Common myeloid progenitor, CD34-positive (primary cell): ENCODE measurements at regions of chr9 and their contacts with region 1.

Region 1: DNA sequence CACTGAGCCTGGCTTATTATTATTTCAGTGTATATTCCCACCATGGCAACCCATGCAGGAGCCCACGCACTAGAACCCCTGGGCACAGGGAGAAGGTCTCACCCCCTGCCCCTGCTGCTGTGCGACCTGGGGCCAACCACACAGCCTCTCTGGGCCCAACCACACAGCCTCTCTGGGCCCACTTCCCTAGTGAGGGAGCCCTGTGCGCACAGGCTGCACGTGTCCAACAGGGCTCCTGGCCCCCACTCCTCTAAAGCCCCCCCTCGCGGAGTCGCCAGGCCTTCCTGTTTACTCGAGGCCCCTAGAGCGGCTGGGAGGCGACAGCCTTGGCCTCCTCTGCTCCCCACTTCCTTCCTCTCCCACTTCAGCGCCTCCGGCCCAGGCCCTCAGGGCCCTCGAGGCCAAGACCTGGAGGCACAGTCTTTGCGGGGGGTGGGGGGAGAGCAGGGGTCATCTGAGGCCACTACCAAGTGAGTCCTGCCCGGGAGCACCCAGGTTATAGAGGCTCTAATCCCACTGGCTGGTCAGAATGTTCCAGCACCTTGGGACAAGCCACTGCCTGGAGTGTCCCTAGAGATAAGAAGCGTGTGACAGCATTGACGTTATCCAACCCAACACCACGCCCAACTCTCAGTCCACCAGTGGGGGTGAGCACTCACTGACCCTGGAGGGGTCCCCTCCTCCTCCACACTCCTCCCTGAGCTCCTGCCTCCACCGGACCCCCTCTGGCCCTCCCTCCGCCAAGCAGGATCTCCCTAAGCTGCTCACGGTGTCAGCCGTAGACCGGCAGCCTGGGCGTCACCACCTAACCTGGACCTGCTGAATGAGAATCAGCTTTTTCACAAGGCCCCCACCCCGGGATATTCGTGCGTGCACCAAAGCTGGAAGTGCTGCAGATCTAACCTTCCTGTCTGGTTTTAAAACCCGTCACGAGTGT is 7.9 kb upstream of the ENG start:
- DNase-seq: peak; percentile 81 to 97 (median 96)
- H3K4me3 ChIP-seq: peak overlapping the region in 4 of 7 experiments; percentile 26 to 57 (median 39)
- H3K27ac ChIP-seq: peak overlapping the region; percentile 66 to 85
- H3K4me1 ChIP-seq: peaks cover 19 to 89% (median 83%) of the 10 kb centered on the region in 4 experiments
- H3K27me3 ChIP-seq: no peaks in the 10 kb centered on the region

Region 2: GRCh38 chr9:127796225-127796813 is 66.0 kb before region 1 on chr9:
- CTCF ChIA-PET with region 1: interaction called, 11 read pairs
- POLR2A ChIA-PET with region 1: interaction called, 4 read pairs
- DNase-seq: peak in 2 of 3 donors; percentile 45 to 63
- H3K4me3 ChIP-seq: peak overlapping the region in 3 of 7 experiments; percentile 16 to 54 (median 32)
- H3K27ac ChIP-seq: peak overlapping the region in 1 of 2 experiments; percentile 55
- H3K4me1 ChIP-seq: peaks cover 19 to 85% (median 65%) of the 10 kb centered on the region in 4 experiments
- H3K27me3 ChIP-seq: no peaks in the 10 kb centered on the region

Region 3: GRCh38 chr9:127838375-127839078 is 23.8 kb before region 1 on chr9:
- CTCF ChIA-PET with region 1: interaction called, 26 read pairs
- POLR2A ChIA-PET with region 1: interaction called, 4 read pairs
- DNase-seq: no peak
- H3K4me3 ChIP-seq: peak overlapping the region in 2 of 7 experiments; percentile 9 to 10
- H3K27ac ChIP-seq: peak overlapping the region in 1 of 2 experiments; percentile 33
- H3K4me1 ChIP-seq: peaks cover 0 to 53% (median 48%) of the 10 kb centered on the region in 4 experiments
- H3K27me3 ChIP-seq: no peaks in the 10 kb centered on the region

Region 4: DNA sequence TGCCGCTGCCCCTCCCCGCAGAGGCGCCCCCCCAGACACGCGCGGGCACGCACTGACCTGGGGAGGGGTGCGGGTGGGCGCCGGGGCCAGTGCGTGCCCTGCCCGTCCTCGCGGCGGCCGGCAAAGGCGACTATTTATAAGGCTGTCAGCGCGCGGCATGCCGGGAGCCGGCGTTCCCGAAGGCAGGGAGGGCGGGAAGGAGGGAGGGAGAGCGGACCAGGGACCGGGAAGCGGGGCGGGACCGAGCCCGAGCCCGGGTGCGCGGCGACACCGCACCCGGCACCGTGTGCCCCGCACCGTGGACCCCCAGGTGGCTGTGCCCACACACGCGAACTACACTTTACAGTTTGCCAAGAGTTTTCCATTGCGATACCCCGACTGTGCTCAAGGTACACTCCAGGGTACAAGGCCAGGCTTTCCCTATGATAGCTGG is 15.2 kb after region 1 on chr9 and contains the start of gene AK1:
- CTCF ChIA-PET with region 1: interaction called, 13 read pairs
- POLR2A ChIA-PET with region 1: interaction called, 3 read pairs
- DNase-seq: no peak
- H3K4me3 ChIP-seq: peak within 1 kb of the TSS in 5 of 7 experiments; percentile 36 to 64 (median 51)
- H3K27ac ChIP-seq: no peak within 1 kb of the TSS
- H3K4me1 ChIP-seq: peaks cover 0 to 24% (median 18%) of the 10 kb centered on the region in 4 experiments
- H3K27me3 ChIP-seq: peaks cover 0 to 3% (median 0%) of the 10 kb centered on the region in 5 experiments